Tibial artery (tissue), 4 donors: ENCODE measurements at regions of chr15 and their contacts with region 1.

Region 1: GRCh38 chr15:26065723-26066122 is 202.6 kb upstream of the ATP10A start:
- DNase-seq: no peak
- H3K4me3 ChIP-seq: no peak overlapping the region
- H3K27ac ChIP-seq: no peak overlapping the region
- H3K4me1 ChIP-seq: peaks cover 0 to 5% (median 0%) of the 10 kb centered on the region in 4 donors
- H3K27me3 ChIP-seq: no peaks in the 10 kb centered on the region
- CTCF ChIP-seq: no peak

Region 2: GRCh38 chr15:26115229-26115943 is 49.7 kb after region 1 on chr15:
- intact Hi-C with region 1: loop called (anchors 10 kb)
- DNase-seq: no peak
- H3K4me3 ChIP-seq: no peak overlapping the region
- H3K27ac ChIP-seq: no peak overlapping the region
- H3K4me1 ChIP-seq: no peaks in the 10 kb centered on the region
- H3K27me3 ChIP-seq: no peaks in the 10 kb centered on the region
- CTCF ChIP-seq: no peak

Region 3: DNA sequence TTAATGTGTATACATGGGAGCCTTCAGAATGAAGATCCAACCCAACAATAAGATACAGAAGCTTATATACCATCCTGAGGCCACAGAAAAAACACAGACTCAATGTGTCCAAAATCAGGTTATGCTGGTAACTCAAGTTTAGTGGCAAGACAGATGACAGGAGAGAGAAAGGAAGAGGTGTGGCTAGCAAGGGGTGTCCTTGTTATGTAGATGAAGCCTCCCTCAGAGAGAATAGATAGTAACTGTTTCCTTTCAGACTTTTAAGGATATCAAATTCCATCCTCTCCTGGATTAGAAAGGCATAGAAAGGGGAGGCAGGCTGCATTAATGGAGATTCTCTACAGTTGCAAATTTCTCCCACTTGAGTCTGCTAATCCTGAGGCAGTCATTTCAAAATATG is 259.8 kb after region 1 on chr15:
- intact Hi-C with region 1: no loop called
- DNase-seq: no peak
- H3K4me3 ChIP-seq: no peak overlapping the region
- H3K27ac ChIP-seq: no peak overlapping the region
- H3K4me1 ChIP-seq: no peaks in the 10 kb centered on the region
- H3K27me3 ChIP-seq: no peaks in the 10 kb centered on the region
- CTCF ChIP-seq: no peak